ENCODE measurements at regions of chr11 and their contacts with region 1.

Region 1: DNA sequence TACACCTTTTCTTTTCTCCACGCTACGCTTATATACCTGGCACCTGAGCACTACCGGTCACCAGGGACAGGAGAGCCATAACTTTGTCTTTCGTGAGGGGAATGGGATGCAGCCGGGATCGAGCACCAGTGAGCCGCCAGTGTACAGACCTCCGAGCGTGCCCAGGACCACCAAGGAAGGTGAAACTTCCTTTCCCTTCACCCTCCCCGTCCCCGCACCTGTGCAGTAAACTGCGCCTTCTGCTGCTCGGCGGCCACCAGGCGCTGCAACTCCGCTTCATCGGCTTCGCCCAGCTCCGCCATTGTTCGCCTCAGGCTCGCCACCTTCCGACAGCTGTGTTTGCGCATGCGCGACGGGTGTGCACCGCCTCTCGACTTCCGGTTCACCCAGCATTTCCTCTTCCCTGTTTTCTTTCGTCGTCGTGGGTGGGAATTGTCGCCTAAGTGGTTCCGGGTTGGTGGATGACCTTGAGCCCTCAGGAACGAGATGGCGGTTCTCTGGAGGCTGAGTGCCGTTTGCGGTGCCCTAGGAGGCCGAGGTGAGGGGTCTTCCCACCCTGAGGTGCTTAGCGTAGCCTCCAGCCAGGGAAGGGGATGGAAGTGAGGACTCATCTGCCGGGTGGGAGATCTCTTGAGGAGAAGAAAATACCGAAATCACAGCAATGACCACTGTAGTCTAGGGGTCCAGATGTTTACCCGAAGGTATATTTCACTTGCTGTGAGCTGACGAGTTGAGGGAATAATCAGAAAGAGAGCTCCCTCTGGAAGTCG is at the starts of genes SDHD and TIMM8B:
- DNase-seq: peak; percentile 96
- H3K4me3 Mint-ChIP-seq: peak within 1 kb of the TSS; percentile 100
- H3K27ac Mint-ChIP-seq: peak within 1 kb of the TSS; percentile 96
- H3K4me1 Mint-ChIP-seq: peaks cover 72% of the 10 kb centered on the region
- H3K27me3 Mint-ChIP-seq: no peaks in the 10 kb centered on the region
- total RNA-seq, gene SDHD: 76.7 to 78.5 TPM
- total RNA-seq, gene TIMM8B: 38.9 to 40.0 TPM

Region 2: GRCh38 chr11:112074026-112074811 is 12.4 kb before region 1 on chr11 and contains the start of gene NKAPD1:
- CTCF ChIA-PET with region 1: interaction called, 3 read pairs
- POLR2A ChIA-PET with region 1: interaction called, 30 read pairs
- DNase-seq: peak; percentile 83
- H3K4me3 Mint-ChIP-seq: peak within 1 kb of the TSS; percentile 90
- H3K27ac Mint-ChIP-seq: peak within 1 kb of the TSS; percentile 83
- H3K4me1 Mint-ChIP-seq: peaks cover 31% of the 10 kb centered on the region
- H3K27me3 Mint-ChIP-seq: peaks cover 15% of the 10 kb centered on the region
- total RNA-seq, gene NKAPD1: 21.2 to 23.9 TPM

Measured in activated CD4-positive, alpha-beta memory T cell treated with anti-CD3 and anti-CD28 coated beads, Interleukin-2, amount 10 ng/mL, durations not matched to agents 7 days and 5 days (primary cell).